BJ (cell line): ENCODE measurements at regions of chr1 and their contacts with region 1.

Region 1: GRCh38 chr1:23496490-23497181 is 12.7 kb upstream of the ASAP3 start:
- DNase-seq: no peak
- H3K4me3 ChIP-seq: no peak overlapping the region
- H3K27me3 ChIP-seq: no peaks in the 10 kb centered on the region
- CTCF ChIP-seq: no peak

Region 2: GRCh38 chr1:23484253-23485001 is 12.2 kb before region 1 on chr1:
- CTCF ChIA-PET with region 1: interaction called, 44 read pairs
- POLR2A ChIA-PET with region 1: interaction called, 30 read pairs
- DNase-seq: peak; percentile 62
- H3K4me3 ChIP-seq: peak overlapping the region; percentile 78
- H3K27me3 ChIP-seq: peaks cover 5% of the 10 kb centered on the region
- CTCF ChIP-seq: no peak

Region 3: DNA sequence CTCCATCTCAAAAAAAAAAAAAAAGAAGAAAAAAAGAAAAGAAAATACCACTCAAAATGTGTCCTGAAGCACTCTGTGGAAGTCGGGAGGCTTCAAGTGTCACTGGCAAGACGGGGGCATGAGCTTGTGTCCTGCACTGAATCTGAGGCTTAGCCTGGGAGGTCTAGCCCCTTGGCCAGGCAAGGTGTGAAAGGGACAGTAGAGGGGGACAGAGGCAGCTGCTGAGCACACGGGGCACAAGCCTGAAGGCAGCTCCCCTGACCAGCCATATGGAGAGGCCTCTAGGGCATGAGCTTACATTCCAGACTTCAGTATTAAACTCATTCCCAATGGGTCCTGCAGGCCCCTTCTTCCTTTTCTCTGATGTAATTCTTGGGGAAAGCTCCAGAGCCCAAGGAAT is 10.9 kb after region 1 on chr1:
- CTCF ChIA-PET with region 1: interaction called, 46 read pairs
- POLR2A ChIA-PET with region 1: no interaction called
- DNase-seq: no peak
- H3K4me3 ChIP-seq: no peak overlapping the region
- H3K27me3 ChIP-seq: no peaks in the 10 kb centered on the region
- CTCF ChIP-seq: no peak

Region 4: DNA sequence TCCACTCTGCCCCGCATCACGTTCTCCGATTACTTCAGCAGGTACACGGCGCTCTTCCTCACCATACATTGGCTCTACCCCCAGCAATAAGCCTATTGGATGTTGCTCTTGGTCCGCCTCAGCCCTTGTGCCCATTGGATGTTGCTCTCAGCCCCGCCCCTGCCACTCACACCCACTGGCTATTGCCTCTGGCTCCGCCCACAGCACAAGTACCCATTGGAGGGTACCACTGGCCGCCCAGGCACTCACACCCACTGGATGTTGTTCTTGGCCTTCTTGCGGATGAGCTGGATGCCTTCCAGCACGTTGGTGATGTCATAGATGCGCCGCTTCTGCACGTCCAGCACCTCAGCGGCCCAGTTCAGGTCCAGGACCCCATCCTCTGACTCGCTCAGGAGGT is 25.0 kb after region 1 on chr1:
- CTCF ChIA-PET with region 1: interaction called, 46 read pairs
- POLR2A ChIA-PET with region 1: no interaction called
- DNase-seq: no peak
- H3K4me3 ChIP-seq: no peak overlapping the region
- H3K27me3 ChIP-seq: no peaks in the 10 kb centered on the region
- CTCF ChIP-seq: no peak

Region 5: DNA sequence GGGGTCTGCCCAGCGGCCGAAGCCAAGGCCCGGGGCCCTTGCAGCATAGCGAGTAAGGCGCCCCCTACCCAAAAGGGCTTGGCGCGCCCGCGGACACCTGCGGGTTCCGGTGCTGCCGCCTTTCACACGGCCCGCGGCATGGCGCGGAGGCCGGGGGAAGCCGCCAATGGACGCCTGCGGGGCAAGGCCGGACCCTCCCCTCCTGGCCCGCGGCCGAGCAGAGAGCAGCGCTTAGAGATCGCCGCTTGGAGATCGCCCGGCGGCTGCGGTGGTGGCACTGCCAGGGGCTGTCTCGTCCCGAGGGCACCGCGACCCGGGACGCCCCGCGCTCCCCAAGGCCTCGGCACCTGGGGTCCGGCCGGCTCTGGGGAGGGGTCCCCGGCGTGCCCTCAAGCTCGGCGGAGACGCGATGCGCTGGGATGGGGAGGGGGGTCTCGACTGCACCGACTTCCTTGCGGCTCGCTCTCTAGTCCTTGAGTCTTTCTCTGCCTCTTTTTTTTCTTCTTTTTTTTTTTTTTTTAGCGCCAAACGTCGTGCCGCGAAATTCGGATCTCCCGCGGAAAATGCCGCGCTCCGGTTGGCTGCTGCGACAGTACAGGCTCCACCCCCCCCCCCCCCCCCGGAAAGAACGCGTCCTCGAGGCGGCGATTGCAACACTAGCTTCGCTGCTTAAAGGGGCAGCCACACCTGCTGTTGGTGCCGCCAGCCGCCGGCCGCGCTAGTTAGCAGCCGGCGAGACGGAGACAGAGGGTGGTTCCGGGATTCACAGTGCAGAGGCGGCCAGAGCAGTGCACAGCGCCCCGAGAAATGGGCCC is 34.3 kb after region 1 on chr1 and contains the start of gene E2F2:
- CTCF ChIA-PET with region 1: interaction called, 46 read pairs
- POLR2A ChIA-PET with region 1: no interaction called
- DNase-seq: no peak
- H3K4me3 ChIP-seq: peak within 1 kb of the TSS; percentile 54
- H3K27me3 ChIP-seq: no peaks in the 10 kb centered on the region
- CTCF ChIP-seq: peak; percentile 29
- polyA plus RNA-seq, gene E2F2: 0.11 TPM in 2 replicates

Region 6: DNA sequence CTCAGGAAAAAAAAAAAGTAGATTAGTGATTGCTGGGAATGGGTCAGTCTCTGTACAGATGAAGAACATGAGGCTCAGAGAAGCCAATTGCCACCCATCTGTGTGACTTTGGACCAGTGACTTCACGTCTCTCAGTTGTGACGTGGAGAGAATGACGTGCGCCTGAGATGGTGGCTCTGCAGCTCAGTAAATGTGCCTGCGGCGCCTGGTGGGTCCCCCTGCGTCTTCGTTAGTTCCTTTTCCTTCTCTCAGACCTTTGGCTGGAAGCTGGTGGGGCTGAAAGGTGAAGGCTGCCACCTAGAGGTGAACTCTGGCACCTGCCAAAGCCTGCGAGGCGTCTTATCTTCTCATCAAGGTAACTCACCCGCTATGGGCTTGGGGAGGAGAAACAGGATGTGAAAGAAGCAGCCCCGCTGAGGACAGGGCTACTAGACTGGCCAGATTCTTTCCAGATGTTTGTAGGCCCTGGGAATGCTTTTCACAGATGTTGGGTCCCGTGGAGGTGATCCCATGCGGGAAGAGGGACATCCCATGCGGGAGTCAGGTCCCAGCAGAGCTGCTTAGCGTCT is 43.1 kb after region 1 on chr1:
- CTCF ChIA-PET with region 1: interaction called, 116 read pairs
- POLR2A ChIA-PET with region 1: no interaction called
- DNase-seq: peak; percentile 69
- H3K4me3 ChIP-seq: no peak overlapping the region
- H3K27me3 ChIP-seq: no peaks in the 10 kb centered on the region
- CTCF ChIP-seq: peak; percentile 93

Region 7: GRCh38 chr1:23664837-23665795 is 168.5 kb after region 1 on chr1:
- CTCF ChIA-PET with region 1: interaction called, 16 read pairs
- POLR2A ChIA-PET with region 1: no interaction called
- DNase-seq: no peak
- H3K4me3 ChIP-seq: no peak overlapping the region
- H3K27me3 ChIP-seq: no peaks in the 10 kb centered on the region
- CTCF ChIP-seq: peak; percentile 47